Posterior vena cava (tissue), 2 donors: ENCODE measurements at regions of chr10 and their contacts with region 1.

Region 1: DNA sequence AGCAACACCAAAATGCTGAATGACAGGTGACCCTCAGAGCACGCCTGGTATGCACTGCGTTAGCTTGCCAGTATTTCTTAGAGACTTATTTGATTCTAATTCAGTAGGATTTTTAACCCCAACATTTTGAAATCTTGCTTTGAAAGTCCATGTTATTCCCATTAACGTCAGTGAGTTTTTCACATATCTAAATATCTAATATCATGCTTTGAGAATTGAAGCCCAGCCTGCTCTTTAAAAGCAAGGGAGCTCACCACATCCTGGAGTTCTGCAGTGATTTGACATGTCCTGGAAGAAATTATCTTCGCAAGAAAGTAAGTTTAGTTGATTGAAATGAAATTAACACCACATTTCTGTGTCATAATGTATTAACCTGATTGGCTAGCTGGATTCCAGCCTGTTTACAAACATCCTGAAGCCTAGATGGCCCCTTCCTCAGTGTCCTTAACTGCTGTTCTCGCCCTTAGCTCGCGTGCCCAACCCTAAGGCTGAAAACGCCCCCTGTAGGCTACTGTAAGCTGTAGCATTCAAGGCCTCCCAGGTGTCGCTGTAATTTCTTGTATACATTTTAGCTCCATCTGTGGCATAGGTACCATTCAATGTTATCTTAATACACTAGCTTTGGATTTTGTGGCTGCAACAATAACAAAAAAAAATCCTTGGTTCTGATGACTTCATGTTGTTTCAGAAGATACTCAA is 191.5 kb downstream of the MGMT start:
- DNase-seq: no peak

Region 2: DNA sequence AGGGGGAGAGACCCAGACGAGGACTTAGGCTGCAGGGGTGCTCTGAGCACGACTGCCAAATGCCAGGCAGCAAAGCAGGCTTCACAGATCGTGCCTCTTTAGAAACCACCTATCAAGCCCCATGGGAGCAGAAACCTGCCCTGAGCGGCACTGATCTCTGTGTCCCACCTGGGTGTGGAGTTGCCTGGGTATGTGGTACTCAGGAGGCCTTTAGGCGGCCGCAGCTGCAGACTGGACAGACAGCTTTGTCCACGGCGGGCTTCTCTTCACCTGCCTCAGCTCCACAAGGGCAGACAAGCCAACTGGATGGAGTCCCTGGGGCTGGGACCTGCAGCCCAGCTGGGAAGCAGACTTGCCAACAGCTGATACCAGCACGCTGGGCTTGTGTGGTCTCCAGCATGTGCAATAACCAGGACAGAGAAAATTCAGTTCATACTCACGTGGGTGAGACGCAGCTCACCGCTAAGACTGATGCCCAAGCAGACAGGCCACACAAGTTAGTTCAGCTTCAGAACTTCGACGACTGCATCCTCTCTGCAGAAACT is 142.3 kb after region 1 on chr10:
- intact Hi-C with region 1: loop called in 1 of 2 experiments (anchors 10 kb)
- DNase-seq: no peak